Ascending aorta (tissue), 2 donors: ENCODE measurements at regions of chr15 and their contacts with region 1.

Region 1: DNA sequence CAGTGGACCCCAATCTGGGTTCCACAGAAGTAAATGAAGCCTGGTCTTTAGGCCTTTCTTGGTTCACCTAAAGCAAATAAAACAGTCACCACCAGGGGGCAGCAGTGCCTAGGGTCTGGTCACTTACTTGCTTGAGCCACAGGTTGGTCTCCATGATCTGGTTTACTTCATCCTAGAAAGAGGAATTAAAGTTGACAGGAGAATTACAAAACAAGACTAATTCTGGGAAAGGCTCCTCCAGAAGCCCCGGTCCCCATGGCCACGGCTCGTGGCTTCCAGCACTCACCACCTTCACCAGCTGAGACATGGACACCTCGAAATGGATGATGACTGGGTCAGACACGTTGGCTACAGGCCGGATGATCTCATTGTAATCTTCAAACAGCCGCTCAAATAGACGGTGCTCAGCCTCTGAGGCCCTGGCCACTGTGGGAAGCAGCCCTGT is 2.3 kb downstream of the CHRNA3 start:
- DNase-seq: peak in 1 of 2 donors; percentile 94
- H3K4me3 ChIP-seq: no peak overlapping the region
- H3K27ac ChIP-seq: no peak overlapping the region
- H3K4me1 ChIP-seq: peaks cover 0 to 11% of the 10 kb centered on the region in 2 donors
- H3K27me3 ChIP-seq: peaks cover 13% of the 10 kb centered on the region
- CTCF ChIP-seq: peak; percentile 70 to 90 (median 81)

Region 2: GRCh38 chr15:78193731-78194567 is 424.6 kb before region 1 on chr15:
- intact Hi-C with region 1: no loop called
- DNase-seq: peak in 1 of 2 donors; percentile 49
- H3K4me3 ChIP-seq: no peak overlapping the region
- H3K27ac ChIP-seq: no peak overlapping the region
- H3K4me1 ChIP-seq: no peaks in the 10 kb centered on the region
- H3K27me3 ChIP-seq: no peaks in the 10 kb centered on the region
- CTCF ChIP-seq: no peak

Region 3: DNA sequence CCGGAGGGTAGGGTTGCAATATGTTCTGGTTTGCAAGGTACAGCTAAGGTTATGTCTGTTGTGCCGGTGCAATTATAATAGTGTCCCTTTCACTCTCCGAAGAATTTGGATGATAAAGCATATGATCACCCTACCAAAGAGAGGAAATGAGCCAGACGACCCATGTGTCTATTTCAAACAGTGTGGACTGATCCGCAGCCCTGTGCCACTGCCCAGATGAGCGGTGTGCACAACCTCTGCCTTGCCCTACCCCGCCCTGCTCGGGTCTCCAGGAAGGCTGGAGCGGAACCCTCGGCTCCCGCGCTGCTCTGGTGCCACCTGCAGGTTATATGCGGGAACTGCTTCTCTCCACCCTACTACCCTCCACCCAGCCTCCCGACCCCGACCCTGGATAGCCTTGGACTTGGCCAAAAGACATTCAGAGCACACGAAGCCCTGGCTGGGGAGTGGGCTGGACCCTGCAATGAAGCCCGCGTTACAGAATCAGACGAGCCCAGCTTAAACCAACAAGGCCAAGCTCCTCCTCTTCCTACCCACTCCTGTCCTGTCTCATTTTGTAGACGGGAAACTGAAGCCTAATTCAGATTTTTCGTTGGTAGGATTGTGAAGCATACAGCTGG is 90.9 kb after region 1 on chr15:
- intact Hi-C with region 1: loop called (anchors 1 kb)
- DNase-seq: peak in 1 of 2 donors; percentile 78
- H3K4me3 ChIP-seq: no peak overlapping the region
- H3K27ac ChIP-seq: no peak overlapping the region
- H3K4me1 ChIP-seq: no peaks in the 10 kb centered on the region
- H3K27me3 ChIP-seq: no peaks in the 10 kb centered on the region
- CTCF ChIP-seq: peak; percentile 82 to 95 (median 83)

Region 4: GRCh38 chr15:79184465-79184892 is 566.0 kb after region 1 on chr15:
- intact Hi-C with region 1: loop called (anchors 5 kb)
- DNase-seq: peak; percentile 17 to 78
- H3K4me3 ChIP-seq: no peak overlapping the region
- H3K27ac ChIP-seq: no peak overlapping the region
- H3K4me1 ChIP-seq: no peaks in the 10 kb centered on the region
- H3K27me3 ChIP-seq: no peaks in the 10 kb centered on the region
- CTCF ChIP-seq: peak; percentile 69 to 99 (median 88)